ENCODE measurements at regions of chr4 and their contacts with region 1.

Region 1: GRCh38 chr4:3041192-3042142 is 32.9 kb downstream of the HTT-AS start:
- DNase-seq: peak; percentile 58 to 67
- H3K4me3 ChIP-seq: peak overlapping the region; percentile 33
- H3K4me3 Mint-ChIP-seq: peak overlapping the region; percentile 67
- H3K27ac Mint-ChIP-seq: peak overlapping the region; percentile 76
- H3K4me1 ChIP-seq: peaks cover 27% of the 10 kb centered on the region
- H3K4me1 Mint-ChIP-seq: peaks cover 13% of the 10 kb centered on the region
- H3K27me3 ChIP-seq: no peaks in the 10 kb centered on the region
- H3K27me3 Mint-ChIP-seq: no peaks in the 10 kb centered on the region
- CTCF ChIP-seq: no peak

Region 2: GRCh38 chr4:2787230-2788088 is 254.0 kb before region 1 on chr4:
- CTCF ChIA-PET with region 1: no interaction called
- POLR2A ChIA-PET with region 1: no interaction called
- intact Hi-C with region 1: no loop called
- DNase-seq: no peak
- H3K4me3 ChIP-seq: no peak overlapping the region
- H3K4me3 Mint-ChIP-seq: no peak overlapping the region
- H3K27ac Mint-ChIP-seq: no peak overlapping the region
- H3K4me1 ChIP-seq: peaks cover 10% of the 10 kb centered on the region
- H3K4me1 Mint-ChIP-seq: no peaks in the 10 kb centered on the region
- H3K27me3 ChIP-seq: no peaks in the 10 kb centered on the region
- H3K27me3 Mint-ChIP-seq: no peaks in the 10 kb centered on the region
- CTCF ChIP-seq: no peak

Region 3: GRCh38 chr4:2948895-2949765 is 92.3 kb before region 1 on chr4:
- CTCF ChIA-PET with region 1: no interaction called
- POLR2A ChIA-PET with region 1: no interaction called
- intact Hi-C with region 1: loop called (anchors 1 kb)
- DNase-seq: peak in 1 of 2 experiments; percentile 54
- H3K4me3 ChIP-seq: no peak overlapping the region
- H3K4me3 Mint-ChIP-seq: no peak overlapping the region
- H3K27ac Mint-ChIP-seq: peak overlapping the region; percentile 45
- H3K4me1 ChIP-seq: peaks cover 5% of the 10 kb centered on the region; the same call in 1 of the 2 replicates
- H3K4me1 Mint-ChIP-seq: peaks cover 6% of the 10 kb centered on the region
- H3K27me3 ChIP-seq: no peaks in the 10 kb centered on the region
- H3K27me3 Mint-ChIP-seq: no peaks in the 10 kb centered on the region
- CTCF ChIP-seq: peak; percentile 49 to 51

Region 4: DNA sequence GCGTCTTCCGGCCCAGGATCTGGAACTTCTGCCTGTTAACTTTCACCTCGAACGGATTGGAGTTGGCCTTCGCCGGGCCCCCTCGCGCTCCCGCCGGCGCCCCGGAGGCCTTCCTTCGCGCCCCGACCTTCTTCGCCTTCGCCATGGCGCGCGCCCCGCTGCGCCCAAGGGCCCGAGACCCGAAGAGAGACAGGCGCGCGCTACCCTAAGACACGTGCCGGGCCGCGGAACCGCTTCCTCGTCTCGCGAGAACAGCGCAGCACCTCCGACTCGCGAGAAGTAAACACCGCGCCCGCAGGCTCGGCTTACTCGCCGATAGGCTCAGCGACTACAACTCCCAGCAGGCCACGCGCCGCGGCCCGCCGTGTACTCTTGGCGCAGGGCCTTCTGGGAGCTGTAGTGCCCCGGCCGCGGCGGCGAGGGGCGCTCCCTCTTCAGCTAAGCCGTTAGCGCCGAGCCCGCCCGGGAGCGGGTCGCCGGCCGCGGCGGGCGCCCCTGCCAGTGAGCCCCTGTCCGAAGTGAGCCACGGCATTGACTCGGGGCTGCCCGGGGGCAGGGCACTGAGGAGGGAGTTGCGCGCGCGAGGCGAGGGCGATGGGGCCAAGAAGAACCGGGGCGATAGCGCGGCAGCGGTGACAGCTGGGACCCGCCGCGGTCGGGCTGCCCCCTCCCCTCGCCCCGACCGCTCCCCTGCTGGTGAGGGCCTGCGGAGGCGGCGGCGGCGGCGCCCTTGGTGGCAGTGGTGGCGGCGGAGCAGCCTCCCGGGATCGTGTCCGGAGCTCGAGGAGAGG is 78.1 kb before region 1 on chr4 and contains the starts of genes GRK4 and NOP14:
- CTCF ChIA-PET with region 1: interaction called, 4 read pairs
- POLR2A ChIA-PET with region 1: interaction called, 3 read pairs
- intact Hi-C with region 1: loop called (anchors 1 kb)
- DNase-seq: peak; percentile 97 to 98
- H3K4me3 ChIP-seq: peak within 1 kb of the TSS; percentile 96
- H3K4me3 Mint-ChIP-seq: peak within 1 kb of the TSS; percentile 73
- H3K27ac Mint-ChIP-seq: peak within 1 kb of the TSS; percentile 88
- H3K4me1 ChIP-seq: peaks cover 7% of the 10 kb centered on the region
- H3K4me1 Mint-ChIP-seq: peaks cover 7% of the 10 kb centered on the region
- H3K27me3 ChIP-seq: no peaks in the 10 kb centered on the region
- H3K27me3 Mint-ChIP-seq: no peaks in the 10 kb centered on the region
- CTCF ChIP-seq: peak; percentile 20 to 29
- total RNA-seq, gene GRK4: 6.8 and 7.1 TPM in 2 replicates
- total RNA-seq, gene NOP14: 55.2 and 60.5 TPM in 2 replicates

Region 5: DNA sequence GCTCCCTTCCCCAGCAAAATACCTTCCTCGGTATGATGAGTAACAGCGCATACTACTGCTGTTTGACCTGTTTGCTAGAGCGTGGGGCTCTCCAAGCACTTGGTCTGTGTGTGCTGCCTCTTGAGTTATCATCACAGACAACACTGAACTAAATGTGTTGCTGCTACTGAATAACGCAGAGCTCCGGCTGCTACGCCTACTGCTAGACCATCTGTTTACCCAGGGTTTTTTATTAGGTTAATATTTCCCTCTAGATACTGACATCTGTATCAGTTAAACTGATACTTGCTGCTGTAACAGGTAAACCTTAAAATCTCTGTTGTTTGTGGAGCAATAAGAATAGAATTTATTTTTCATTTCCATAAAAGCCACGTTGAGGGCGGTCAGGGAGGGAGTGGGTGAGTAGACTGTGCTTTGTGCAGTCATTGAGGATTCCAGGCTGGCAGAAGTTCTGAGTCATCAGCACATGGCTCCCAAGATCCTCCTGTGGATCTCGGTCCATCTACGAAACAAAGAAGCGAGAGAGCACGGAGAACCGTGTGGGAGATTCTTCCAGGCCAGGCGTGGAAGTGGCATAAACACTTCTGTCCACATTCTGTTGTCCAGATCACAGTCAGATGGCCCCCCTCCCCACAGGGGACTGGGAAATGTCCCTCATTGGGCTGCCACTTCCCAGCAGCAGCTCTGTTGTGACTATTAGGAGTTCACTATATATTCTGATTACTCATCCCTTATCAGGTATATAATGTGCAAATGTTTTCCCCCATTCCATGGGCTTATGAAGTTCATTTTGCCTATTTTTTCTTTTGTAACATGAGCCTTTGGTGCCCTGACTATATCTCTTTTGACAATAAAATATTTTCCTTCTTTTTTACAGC is 64.0 kb before region 1 on chr4:
- CTCF ChIA-PET with region 1: no interaction called
- POLR2A ChIA-PET with region 1: no interaction called
- intact Hi-C with region 1: loop called (anchors 1 kb)
- DNase-seq: no peak
- H3K4me3 ChIP-seq: no peak overlapping the region; the same call in 1 of the 2 replicates
- H3K4me3 Mint-ChIP-seq: no peak overlapping the region
- H3K27ac Mint-ChIP-seq: peak overlapping the region; percentile 57
- H3K4me1 ChIP-seq: peaks cover 15% of the 10 kb centered on the region
- H3K4me1 Mint-ChIP-seq: no peaks in the 10 kb centered on the region
- H3K27me3 ChIP-seq: no peaks in the 10 kb centered on the region
- H3K27me3 Mint-ChIP-seq: no peaks in the 10 kb centered on the region
- CTCF ChIP-seq: no peak

Region 6: GRCh38 chr4:3074078-3074795 is 32.8 kb after region 1 on chr4 and contains the starts of genes HTT and HTT-AS:
- CTCF ChIA-PET with region 1: interaction called, 3 read pairs
- POLR2A ChIA-PET with region 1: no interaction called
- intact Hi-C with region 1: loop called (anchors 1 kb)
- DNase-seq: peak; percentile 93 to 96
- H3K4me3 ChIP-seq: peak within 1 kb of the TSS; percentile 94
- H3K4me3 Mint-ChIP-seq: peak within 1 kb of the TSS; percentile 96
- H3K27ac Mint-ChIP-seq: peak within 1 kb of the TSS; percentile 91
- H3K4me1 ChIP-seq: peaks cover 13% of the 10 kb centered on the region
- H3K4me1 Mint-ChIP-seq: peaks cover 9% of the 10 kb centered on the region
- H3K27me3 ChIP-seq: no peaks in the 10 kb centered on the region
- H3K27me3 Mint-ChIP-seq: no peaks in the 10 kb centered on the region
- CTCF ChIP-seq: peak in 1 of 2 experiments; percentile 11
- total RNA-seq, gene HTT: 57.5 and 63.3 TPM in 2 replicates
- total RNA-seq, gene HTT-AS: not detected in 2 replicates